Right ventricle myocardium superior (tissue), 1 donor: ENCODE measurements at regions of chr4 and their contacts with region 1.

Region 1: GRCh38 chr4:23697722-23698121 is 192.1 kb downstream of the PPARGC1A start:
- DNase-seq: no peak
- ATAC-seq: peak; percentile 46

Region 2: DNA sequence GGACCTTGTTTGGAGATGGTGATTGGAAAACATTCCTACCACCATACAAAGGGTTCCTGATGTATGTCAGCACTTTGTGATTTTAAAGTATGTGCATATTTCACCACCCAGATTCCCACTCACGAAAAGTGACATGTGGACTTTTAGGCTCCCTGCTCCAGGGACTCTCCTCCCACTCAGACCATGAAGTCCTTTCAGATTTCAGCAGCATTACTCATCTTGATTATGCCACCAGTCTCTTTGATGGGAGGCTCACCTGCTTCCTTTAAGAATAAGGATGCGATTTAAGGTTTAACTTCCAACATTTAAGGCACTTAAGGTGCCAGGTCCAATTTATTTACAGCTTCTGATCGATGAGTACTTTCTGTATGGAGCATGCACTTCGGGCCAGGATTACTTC is 12.2 kb before region 1 on chr4:
- intact Hi-C with region 1: loop called (anchors 2 kb)
- DNase-seq: no peak
- ATAC-seq: no peak

Region 3: DNA sequence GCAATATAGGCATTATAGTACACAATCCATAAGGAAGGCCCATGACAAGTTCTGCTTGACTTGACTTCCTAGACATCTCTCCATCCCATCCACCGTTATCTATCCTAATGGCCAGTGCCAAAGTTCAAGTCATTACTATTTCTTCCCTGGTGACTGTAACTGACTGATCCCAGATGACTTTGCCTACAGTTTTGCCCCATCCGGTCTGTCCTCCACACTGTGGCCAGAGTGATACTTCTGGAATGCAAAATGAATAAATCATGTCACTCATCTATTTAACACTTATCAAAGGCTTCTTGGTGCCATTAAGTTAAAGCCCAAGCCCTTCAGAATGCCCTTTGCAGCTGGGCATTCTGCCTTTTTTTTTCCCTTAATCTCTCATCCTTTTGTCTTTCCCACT is 61.3 kb after region 1 on chr4:
- intact Hi-C with region 1: no loop called
- DNase-seq: no peak
- ATAC-seq: peak; percentile 36